ENCODE measurements at regions of chr11 and their contacts with region 1.

Region 1: DNA sequence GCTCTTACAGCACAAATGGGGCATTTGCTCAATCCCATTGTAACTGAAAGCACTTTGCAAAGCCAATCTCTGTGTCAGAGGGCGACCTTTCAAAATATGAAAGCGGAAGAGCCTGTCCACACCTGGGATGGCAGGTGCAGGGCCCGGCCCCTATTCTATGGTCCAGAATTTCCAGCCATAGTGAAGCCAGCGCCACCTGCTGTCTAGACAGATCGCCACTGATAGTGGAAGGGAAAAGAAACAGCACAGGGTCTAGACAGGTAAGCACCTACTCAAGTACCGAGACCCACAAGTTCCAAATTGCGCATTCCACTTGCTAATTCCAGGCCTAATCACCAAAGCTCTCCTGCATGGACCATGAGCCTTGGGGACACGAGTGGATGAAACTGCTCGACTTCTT is 141.4 kb downstream of the NTM start:
- DNase-seq: no peak
- H3K4me3 Mint-ChIP-seq: no peak overlapping the region
- H3K27ac Mint-ChIP-seq: no peak overlapping the region
- H3K4me1 Mint-ChIP-seq: no peaks in the 10 kb centered on the region
- H3K27me3 Mint-ChIP-seq: no peaks in the 10 kb centered on the region

Region 2: DNA sequence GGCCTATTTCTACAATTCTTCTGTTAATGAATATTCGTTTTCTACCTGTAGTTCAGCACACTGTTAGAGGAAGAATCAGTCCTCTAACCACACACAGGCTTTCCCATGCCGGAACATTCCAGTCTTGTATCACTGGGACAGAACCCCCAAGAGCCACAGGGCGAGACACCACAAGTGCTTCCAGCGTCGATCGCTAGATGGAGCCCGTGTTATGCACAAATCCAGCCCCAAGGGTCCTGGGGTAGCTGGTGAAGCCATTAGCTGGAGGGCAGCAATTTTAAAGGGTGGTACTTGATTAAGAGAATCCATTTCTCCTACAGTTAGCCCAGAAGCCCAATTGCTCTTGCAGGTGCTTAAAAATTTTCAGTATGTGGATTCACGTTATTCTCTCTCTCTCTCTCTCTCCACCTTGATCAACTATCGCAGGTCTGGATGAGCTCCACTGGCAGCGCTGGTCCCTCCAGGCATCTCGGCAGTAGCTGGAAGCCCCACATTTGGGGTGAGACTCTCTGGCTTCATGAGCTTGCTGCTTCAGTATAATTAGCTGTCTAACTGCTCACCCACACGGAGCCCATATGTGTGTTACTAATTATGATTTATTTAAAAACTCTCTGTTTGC is 447.3 kb before region 1 on chr11:
- intact Hi-C with region 1: loop called (anchors 10 kb)
- DNase-seq: no peak
- H3K4me3 Mint-ChIP-seq: no peak overlapping the region
- H3K27ac Mint-ChIP-seq: no peak overlapping the region
- H3K4me1 Mint-ChIP-seq: no peaks in the 10 kb centered on the region
- H3K27me3 Mint-ChIP-seq: no peaks in the 10 kb centered on the region

Region 3: GRCh38 chr11:131295986-131296385 is 215.8 kb before region 1 on chr11:
- intact Hi-C with region 1: no loop called
- DNase-seq: no peak
- H3K4me3 Mint-ChIP-seq: no peak overlapping the region
- H3K27ac Mint-ChIP-seq: no peak overlapping the region
- H3K4me1 Mint-ChIP-seq: no peaks in the 10 kb centered on the region
- H3K27me3 Mint-ChIP-seq: peaks cover 3% of the 10 kb centered on the region

Measured in activated T-helper 2 cell treated with anti-CD3 and anti-CD28 coated beads, Interferon-gamma antibody, Interleukin-2, Interleukin-4, amounts not matched to agents 10 μg/mL and 5 μg/mL and 100 μg/mL, durations not matched to agents 14 hours and 24 hours and 36 hours (primary cell).